ENCODE measurements at regions of chr3 and their contacts with region 1.

Region 1: DNA sequence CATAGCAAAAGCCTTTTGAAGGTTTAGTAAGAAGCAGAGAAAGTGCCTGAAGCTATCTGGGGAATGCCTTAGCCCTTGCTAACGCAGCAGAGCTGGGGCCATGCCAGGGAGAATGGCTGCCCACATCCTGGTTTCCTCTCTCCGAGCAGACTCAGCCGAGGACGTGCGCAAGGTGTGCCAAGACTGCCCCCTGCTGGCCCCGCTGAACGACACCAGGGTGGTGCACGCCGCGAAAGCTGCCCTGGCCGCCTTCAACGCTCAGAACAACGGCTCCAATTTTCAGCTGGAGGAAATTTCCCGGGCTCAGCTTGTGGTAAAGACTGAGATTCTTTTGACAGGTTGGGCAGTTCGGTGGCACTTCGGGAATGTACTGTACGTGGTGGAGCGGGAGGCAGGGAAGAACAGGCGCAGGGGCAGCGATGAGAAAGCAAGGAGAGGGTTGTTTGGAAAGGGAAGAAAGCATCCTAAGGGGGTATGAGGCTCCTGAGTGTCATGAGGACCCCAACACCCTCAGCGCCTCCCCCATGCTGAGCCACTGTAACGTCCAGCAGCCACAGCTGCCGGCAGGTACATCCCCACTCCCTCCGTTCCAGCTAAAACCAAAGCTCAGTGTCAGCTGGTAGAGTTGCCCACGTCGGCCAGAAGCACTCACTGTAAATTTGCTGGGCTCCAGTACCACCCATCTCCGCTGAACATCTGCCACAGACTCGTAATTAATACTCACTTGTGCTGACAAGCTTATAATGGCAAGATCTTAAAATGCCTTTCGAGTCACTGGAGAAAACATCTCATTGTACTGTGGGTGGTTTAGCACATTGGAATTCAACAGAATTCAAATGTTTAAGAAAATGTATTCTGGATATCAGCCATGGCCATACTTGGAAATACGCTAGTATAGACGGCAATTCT is 4.4 kb downstream of the AHSG start:
- DNase-seq: peak; percentile 75 to 87
- H3K4me3 ChIP-seq: peak overlapping the region in 1 of 4 experiments; percentile 17; a peak in 1 of 8 replicates
- H3K27ac ChIP-seq: no peak overlapping the region
- H3K4me1 ChIP-seq: peaks cover 0 to 7% (median 6%) of the 10 kb centered on the region in 4 experiments; a peak in 6 of 7 replicates
- H3K27me3 ChIP-seq: peaks cover 0 to 2% (median 0%) of the 10 kb centered on the region in 4 experiments; a peak in 1 of 7 replicates
- CTCF ChIP-seq: peak; percentile 85 to 98 (median 96)
- EP300 ChIP-seq: no peak
- POLR2A ChIP-seq: no peak
- RAD21 ChIP-seq: peak; percentile 74 to 84

Region 2: GRCh38 chr3:186589121-186589520 is 28.2 kb before region 1 on chr3:
- CTCF ChIA-PET with region 1: interaction called, 333 read pairs
- POLR2A ChIA-PET with region 1: interaction called, 4 read pairs
- DNase-seq: no peak
- H3K4me3 ChIP-seq: no peak overlapping the region
- H3K27ac ChIP-seq: no peak overlapping the region
- H3K4me1 ChIP-seq: no peaks in the 10 kb centered on the region
- H3K27me3 ChIP-seq: no peaks in the 10 kb centered on the region
- CTCF ChIP-seq: peak in 2 of 3 experiments; percentile 45 to 54; a peak in 3 of 4 replicates
- EP300 ChIP-seq: no peak
- POLR2A ChIP-seq: no peak
- RAD21 ChIP-seq: peak; percentile 78 to 82

Region 3: DNA sequence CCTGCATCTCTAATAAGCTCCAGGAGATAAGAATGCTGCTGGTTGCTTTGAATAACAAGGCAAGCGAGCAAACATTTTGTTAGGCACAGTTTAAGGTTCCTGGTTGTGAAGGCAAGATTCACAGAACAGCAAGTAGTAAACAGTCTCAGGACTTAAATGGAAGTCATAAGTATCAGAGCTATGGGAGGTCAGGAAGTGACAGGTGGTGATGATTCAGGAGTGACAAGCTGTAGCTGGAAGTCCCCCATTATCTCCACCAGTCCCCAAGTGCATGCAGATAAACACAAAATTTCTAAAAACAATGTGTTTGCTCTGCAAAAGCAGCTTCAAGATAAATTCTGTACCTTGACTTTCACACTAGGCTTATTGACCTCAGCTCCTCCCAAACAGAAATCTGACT is 26.2 kb after region 1 on chr3:
- CTCF ChIA-PET with region 1: interaction called, 35 read pairs
- POLR2A ChIA-PET with region 1: no interaction called
- DNase-seq: no peak
- H3K4me3 ChIP-seq: no peak overlapping the region
- H3K27ac ChIP-seq: no peak overlapping the region
- H3K4me1 ChIP-seq: peaks cover 5 to 12% (median 8%) of the 10 kb centered on the region in 4 experiments; a peak in 5 of 7 replicates
- H3K27me3 ChIP-seq: no peaks in the 10 kb centered on the region; a peak in 1 of 7 replicates
- CTCF ChIP-seq: no peak
- EP300 ChIP-seq: no peak
- POLR2A ChIP-seq: no peak
- RAD21 ChIP-seq: no peak

Region 4: GRCh38 chr3:186663361-186664118 is 46.2 kb after region 1 on chr3:
- CTCF ChIA-PET with region 1: interaction called, 13 read pairs
- POLR2A ChIA-PET with region 1: no interaction called
- DNase-seq: peak in 1 of 2 experiments; percentile 66
- H3K4me3 ChIP-seq: peak overlapping the region in 1 of 4 experiments; percentile 15; a peak in 2 of 8 replicates
- H3K27ac ChIP-seq: peak overlapping the region; percentile 64
- H3K4me1 ChIP-seq: peaks cover 2 to 13% (median 7%) of the 10 kb centered on the region in 4 experiments; a peak in 4 of 7 replicates
- H3K27me3 ChIP-seq: no peaks in the 10 kb centered on the region
- CTCF ChIP-seq: no peak
- EP300 ChIP-seq: no peak
- POLR2A ChIP-seq: peak in 1 of 2 experiments; percentile 41; a peak in 1 of 3 replicates
- RAD21 ChIP-seq: no peak

Region 5: DNA sequence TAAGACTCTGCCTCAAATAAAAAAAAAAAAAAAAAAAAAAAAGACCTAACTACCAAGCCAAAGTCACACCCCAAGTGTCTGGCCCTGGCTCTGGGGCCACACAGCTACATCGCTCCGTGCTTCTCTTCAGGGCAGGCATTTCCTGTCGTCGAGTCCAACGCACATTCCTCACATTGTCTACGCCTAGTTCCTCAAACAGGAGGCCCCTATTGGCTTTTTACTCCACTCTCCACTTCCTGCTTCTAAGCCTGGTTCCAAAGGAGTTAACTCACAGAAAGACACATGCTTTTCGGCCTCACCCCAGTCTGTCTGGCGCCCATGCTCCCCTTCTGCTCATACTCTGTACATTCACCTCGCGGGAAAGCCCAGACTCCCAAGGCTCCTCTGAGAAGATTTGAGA is 128.7 kb after region 1 on chr3:
- CTCF ChIA-PET with region 1: interaction called, 229 read pairs
- POLR2A ChIA-PET with region 1: no interaction called
- DNase-seq: peak in 1 of 2 experiments; percentile 54
- H3K4me3 ChIP-seq: no peak overlapping the region
- H3K27ac ChIP-seq: peak overlapping the region; percentile 24; the same call in 1 of the 2 replicates
- H3K4me1 ChIP-seq: peaks cover 0 to 5% (median 0%) of the 10 kb centered on the region in 4 experiments; a peak in 3 of 7 replicates
- H3K27me3 ChIP-seq: no peaks in the 10 kb centered on the region
- CTCF ChIP-seq: no peak
- EP300 ChIP-seq: no peak
- POLR2A ChIP-seq: 0 out of 3 replicates have a peak, but pooled peaks of 1 of the 2 experiments have one; percentile 23
- RAD21 ChIP-seq: no peak

Region 6: GRCh38 chr3:186821429-186822367 is 204.4 kb after region 1 on chr3:
- CTCF ChIA-PET with region 1: interaction called, 43 read pairs
- POLR2A ChIA-PET with region 1: no interaction called
- DNase-seq: no peak
- H3K4me3 ChIP-seq: no peak overlapping the region
- H3K27ac ChIP-seq: no peak overlapping the region
- H3K4me1 ChIP-seq: peaks cover 7 to 23% (median 19%) of the 10 kb centered on the region in 4 experiments
- H3K27me3 ChIP-seq: peaks cover 0 to 23% (median 14%) of the 10 kb centered on the region in 4 experiments; a peak in 5 of 7 replicates
- CTCF ChIP-seq: peak in 2 of 3 experiments; percentile 41 to 57; a peak in 2 of 4 replicates
- EP300 ChIP-seq: no peak
- POLR2A ChIP-seq: no peak
- RAD21 ChIP-seq: peak; percentile 73 to 78

Region 7: GRCh38 chr3:186871403-186871924 is 254.2 kb after region 1 on chr3:
- CTCF ChIA-PET with region 1: no interaction called
- POLR2A ChIA-PET with region 1: no interaction called
- DNase-seq: no peak
- H3K4me3 ChIP-seq: no peak overlapping the region
- H3K27ac ChIP-seq: no peak overlapping the region
- H3K4me1 ChIP-seq: no peaks in the 10 kb centered on the region
- H3K27me3 ChIP-seq: peaks cover 0 to 1% (median 0%) of the 10 kb centered on the region in 4 experiments; a peak in 1 of 7 replicates
- CTCF ChIP-seq: no peak
- EP300 ChIP-seq: no peak
- POLR2A ChIP-seq: no peak
- RAD21 ChIP-seq: no peak

Measured in H1 (cell line).